Aorta (tissue), 5 donors: ENCODE measurements at regions of chr12 and their contacts with region 1.

Region 1: GRCh38 chr12:71415336-71416231 is 24.0 kb upstream of the LGR5 start:
- DNase-seq: no peak
- ATAC-seq: no peak
- H3K4me3 ChIP-seq: no peak overlapping the region
- H3K27ac ChIP-seq: no peak overlapping the region
- H3K4me1 ChIP-seq: no peaks in the 10 kb centered on the region
- H3K27me3 ChIP-seq: no peaks in the 10 kb centered on the region

Region 2: DNA sequence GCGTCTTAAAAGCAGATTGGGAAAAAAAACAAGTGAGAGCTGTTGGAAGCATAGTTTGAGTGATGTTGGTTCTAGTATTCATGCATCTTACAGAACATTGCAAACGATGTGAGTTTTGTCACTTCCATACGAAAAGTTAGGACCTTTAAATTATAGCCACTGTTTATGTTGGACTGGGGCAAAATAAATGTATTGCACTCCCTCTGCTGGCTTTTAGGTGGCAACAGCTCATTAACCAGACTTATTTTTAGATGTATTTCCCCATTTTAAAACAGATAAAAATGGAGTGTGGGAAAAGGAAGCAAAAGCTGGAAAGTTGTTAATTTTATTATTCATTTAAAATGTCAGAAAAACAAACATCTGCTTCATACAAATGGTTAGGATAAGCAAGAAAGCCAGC is 135.9 kb after region 1 on chr12:
- intact Hi-C with region 1: loop called (anchors 5 to 10 kb)
- DNase-seq: no peak
- ATAC-seq: no peak
- H3K4me3 ChIP-seq: no peak overlapping the region
- H3K27ac ChIP-seq: no peak overlapping the region
- H3K4me1 ChIP-seq: no peaks in the 10 kb centered on the region
- H3K27me3 ChIP-seq: no peaks in the 10 kb centered on the region

Region 3: GRCh38 chr12:71636704-71637115 is 221.1 kb after region 1 on chr12:
- intact Hi-C with region 1: loop called (anchors 5 kb)
- DNase-seq: no peak
- ATAC-seq: peak; percentile 64
- H3K4me3 ChIP-seq: no peak overlapping the region
- H3K27ac ChIP-seq: no peak overlapping the region
- H3K4me1 ChIP-seq: no peaks in the 10 kb centered on the region
- H3K27me3 ChIP-seq: no peaks in the 10 kb centered on the region

Region 4: GRCh38 chr12:71746983-71747611 is 331.5 kb after region 1 on chr12:
- intact Hi-C with region 1: loop called (anchors 10 kb)
- DNase-seq: no peak
- ATAC-seq: peak; percentile 75
- H3K4me3 ChIP-seq: no peak overlapping the region
- H3K27ac ChIP-seq: no peak overlapping the region
- H3K4me1 ChIP-seq: no peaks in the 10 kb centered on the region
- H3K27me3 ChIP-seq: no peaks in the 10 kb centered on the region

Region 5: GRCh38 chr12:71754461-71755145 is 339.0 kb after region 1 on chr12 and contains the start of gene RAB21:
- intact Hi-C with region 1: loop called (anchors 10 kb)
- DNase-seq: peak; percentile 100
- ATAC-seq: peak; percentile 98
- H3K4me3 ChIP-seq: peak within 1 kb of the TSS; percentile 93
- H3K27ac ChIP-seq: peak within 1 kb of the TSS; percentile 95 to 99
- H3K4me1 ChIP-seq: peaks cover 2 to 3% of the 10 kb centered on the region in 2 donors
- H3K27me3 ChIP-seq: no peaks in the 10 kb centered on the region
- total RNA-seq, gene RAB21: 97.2 to 113 TPM